BJ (cell line): ENCODE measurements at regions of chr3 and their contacts with region 1.

Region 1: GRCh38 chr3:37946531-37946889 is 44.1 kb upstream of the VILL start:
- DNase-seq: no peak
- H3K4me3 ChIP-seq: no peak overlapping the region
- H3K27me3 ChIP-seq: no peaks in the 10 kb centered on the region
- CTCF ChIP-seq: no peak

Region 2: GRCh38 chr3:37935756-37936666 is 10.5 kb before region 1 on chr3:
- CTCF ChIA-PET with region 1: no interaction called
- POLR2A ChIA-PET with region 1: interaction called, 11 read pairs
- DNase-seq: peak; percentile 95
- H3K4me3 ChIP-seq: no peak overlapping the region
- H3K27me3 ChIP-seq: no peaks in the 10 kb centered on the region
- CTCF ChIP-seq: no peak